ENCODE measurements at regions of chr20 and their contacts with region 1.

Region 1: GRCh38 chr20:41249406-41250281 is 67.9 kb downstream of the ZHX3 start:
- DNase-seq: no peak
- H3K4me3 ChIP-seq: peak overlapping the region; percentile 2 to 27 (median 12)
- H3K27ac ChIP-seq: peak overlapping the region; percentile 86 to 96 (median 92)
- H3K4me1 ChIP-seq: peaks cover 64 to 91% (median 77%) of the 10 kb centered on the region in 4 donors
- H3K27me3 ChIP-seq: no peaks in the 10 kb centered on the region
- CTCF ChIP-seq: peak; percentile 25 to 53 (median 41)
- EP300 ChIP-seq: no peak
- POLR2A ChIP-seq: no peak

Region 2: DNA sequence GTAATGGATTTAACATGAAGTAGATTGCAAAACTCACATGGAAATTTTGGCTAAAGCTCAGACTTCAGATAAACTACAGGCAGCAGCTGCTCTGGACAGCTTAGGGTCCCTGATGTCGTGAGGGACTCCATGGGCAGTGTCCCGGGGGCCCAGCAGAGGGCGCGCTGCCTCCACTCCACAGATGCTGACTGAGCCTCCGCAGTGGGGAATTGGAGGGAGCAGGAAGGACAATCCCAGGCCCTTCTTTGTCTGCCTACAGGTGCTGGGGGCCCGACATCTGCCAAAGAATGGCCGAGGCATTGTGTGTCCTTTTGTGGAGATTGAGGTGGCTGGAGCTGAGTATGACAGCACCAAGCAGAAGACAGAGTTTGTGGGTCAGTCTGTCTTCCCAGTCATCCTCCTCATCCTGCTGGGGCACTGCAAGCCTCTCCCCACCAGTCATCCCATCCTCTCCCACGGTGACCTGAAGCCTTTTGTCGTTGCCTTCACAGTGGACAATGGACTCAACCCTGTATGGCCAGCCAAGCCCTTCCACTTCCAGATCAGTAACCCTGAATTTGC is 76.4 kb before region 1 on chr20:
- intact Hi-C with region 1: loop called (anchors 5 kb)
- DNase-seq: peak; percentile 98
- H3K4me3 ChIP-seq: no peak overlapping the region
- H3K27ac ChIP-seq: peak overlapping the region; percentile 77 to 85 (median 81)
- H3K4me1 ChIP-seq: peaks cover 68 to 74% (median 70%) of the 10 kb centered on the region in 4 donors
- H3K27me3 ChIP-seq: no peaks in the 10 kb centered on the region
- CTCF ChIP-seq: peak; percentile 98
- EP300 ChIP-seq: no peak
- POLR2A ChIP-seq: no peak

Region 3: DNA sequence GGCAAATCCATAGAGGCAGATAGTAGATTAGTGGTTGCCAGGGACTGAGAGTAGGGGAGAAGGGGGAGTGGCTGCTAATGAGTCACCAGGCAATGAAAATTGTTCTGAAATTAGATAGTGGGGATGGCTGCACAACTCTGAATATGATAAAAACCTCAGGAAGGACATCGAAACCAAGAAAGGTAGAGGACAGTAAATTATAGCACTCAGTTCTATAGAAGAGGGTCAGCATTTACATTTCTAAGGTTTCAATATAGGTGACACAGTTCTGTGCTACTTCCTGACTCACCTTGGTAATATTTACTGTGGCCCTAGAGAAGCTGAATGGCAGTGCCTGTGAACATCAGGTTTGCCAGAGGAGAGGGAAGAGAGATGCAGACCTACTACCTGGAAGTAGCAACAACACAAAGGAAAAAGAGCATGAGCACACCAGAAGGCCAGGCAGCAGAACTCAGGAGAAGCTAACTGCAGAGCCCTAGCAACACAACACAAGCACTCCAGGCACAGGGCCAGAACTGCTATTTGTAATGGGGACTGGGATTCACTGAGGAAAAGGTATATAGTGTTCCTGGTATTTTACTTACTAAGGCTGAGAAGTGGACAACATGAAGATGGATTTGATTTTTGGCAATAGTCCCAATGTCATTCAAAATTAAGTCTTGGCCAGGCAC is 36.4 kb before region 1 on chr20:
- intact Hi-C with region 1: no loop called
- DNase-seq: no peak
- H3K4me3 ChIP-seq: no peak overlapping the region
- H3K27ac ChIP-seq: no peak overlapping the region
- H3K4me1 ChIP-seq: peaks cover 13 to 24% (median 19%) of the 10 kb centered on the region in 4 donors
- H3K27me3 ChIP-seq: no peaks in the 10 kb centered on the region
- CTCF ChIP-seq: no peak
- EP300 ChIP-seq: no peak
- POLR2A ChIP-seq: no peak

Region 4: GRCh38 chr20:41317536-41318270 is 68.1 kb after region 1 on chr20 and contains the start of gene ZHX3:
- intact Hi-C with region 1: loop called (anchors 5 kb)
- DNase-seq: peak; percentile 97
- H3K4me3 ChIP-seq: peak within 1 kb of the TSS; percentile 76 to 89 (median 83)
- H3K27ac ChIP-seq: peak within 1 kb of the TSS; percentile 89 to 97 (median 95)
- H3K4me1 ChIP-seq: peaks cover 24 to 46% (median 43%) of the 10 kb centered on the region in 4 donors
- H3K27me3 ChIP-seq: no peaks in the 10 kb centered on the region
- CTCF ChIP-seq: no peak
- EP300 ChIP-seq: no peak
- POLR2A ChIP-seq: no peak
- total RNA-seq, gene ZHX3: 89.3 to 173 (median 156) TPM

Region 5: DNA sequence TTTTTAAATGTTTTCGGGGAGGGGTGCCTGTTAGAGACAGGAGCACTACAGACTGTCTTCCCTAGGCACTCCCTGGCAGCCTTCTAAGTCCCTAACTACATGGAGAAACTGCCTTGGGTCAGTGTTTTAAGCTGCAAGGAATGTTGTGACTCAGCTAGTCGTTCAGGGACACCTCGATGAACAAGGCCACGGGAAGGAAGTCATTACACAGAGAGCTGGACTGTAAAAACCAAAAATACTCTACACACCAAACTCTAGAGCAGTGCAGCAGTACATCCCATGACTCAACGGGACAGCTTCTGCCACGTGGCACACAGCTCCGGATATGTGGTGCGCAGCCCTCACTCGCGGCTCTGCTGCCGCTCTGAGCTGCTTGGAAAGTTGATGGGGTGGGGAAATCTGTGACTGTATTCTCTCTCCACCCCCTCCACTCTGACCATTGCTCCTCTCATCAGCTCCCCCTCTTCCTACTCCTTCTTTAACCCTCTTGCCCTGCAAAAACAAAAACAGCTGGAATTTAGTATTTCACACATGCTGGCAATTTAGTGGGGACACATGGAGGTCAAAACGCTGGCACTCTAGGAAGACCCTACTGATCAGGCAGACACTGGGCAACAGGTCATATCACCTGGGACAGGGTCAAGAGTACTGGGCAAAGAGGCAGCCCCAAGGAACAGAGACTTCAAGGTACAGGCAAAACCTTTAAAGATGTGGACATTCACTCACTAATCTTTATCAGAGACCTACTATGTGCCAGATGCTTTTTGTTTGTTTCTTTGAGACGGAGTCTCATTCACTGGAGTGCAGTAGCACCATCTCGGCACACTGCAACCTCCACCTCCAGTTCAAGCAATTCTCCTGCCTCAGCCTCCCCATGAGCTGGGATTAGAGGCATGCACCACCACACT is 80.0 kb after region 1 on chr20:
- intact Hi-C with region 1: loop called (anchors 5 kb)
- DNase-seq: no peak
- H3K4me3 ChIP-seq: peak overlapping the region in 2 of 4 donors; percentile 6 to 16
- H3K27ac ChIP-seq: peak overlapping the region; percentile 84 to 88 (median 86)
- H3K4me1 ChIP-seq: peaks cover 23 to 29% (median 25%) of the 10 kb centered on the region in 4 donors
- H3K27me3 ChIP-seq: no peaks in the 10 kb centered on the region
- CTCF ChIP-seq: no peak
- EP300 ChIP-seq: no peak
- POLR2A ChIP-seq: no peak

Measured in esophagus muscularis mucosa (tissue), 4 donors.